ENCODE measurements at regions of chr12 and their contacts with region 1.

Region 1: GRCh38 chr12:94305130-94305957 is 154.3 kb downstream of the CEP83 start:
- DNase-seq: peak; percentile 92
- H3K4me3 Mint-ChIP-seq: peak overlapping the region; percentile 60
- H3K27ac Mint-ChIP-seq: peak overlapping the region; percentile 82
- H3K4me1 Mint-ChIP-seq: peaks cover 47% of the 10 kb centered on the region
- H3K27me3 Mint-ChIP-seq: no peaks in the 10 kb centered on the region

Region 2: DNA sequence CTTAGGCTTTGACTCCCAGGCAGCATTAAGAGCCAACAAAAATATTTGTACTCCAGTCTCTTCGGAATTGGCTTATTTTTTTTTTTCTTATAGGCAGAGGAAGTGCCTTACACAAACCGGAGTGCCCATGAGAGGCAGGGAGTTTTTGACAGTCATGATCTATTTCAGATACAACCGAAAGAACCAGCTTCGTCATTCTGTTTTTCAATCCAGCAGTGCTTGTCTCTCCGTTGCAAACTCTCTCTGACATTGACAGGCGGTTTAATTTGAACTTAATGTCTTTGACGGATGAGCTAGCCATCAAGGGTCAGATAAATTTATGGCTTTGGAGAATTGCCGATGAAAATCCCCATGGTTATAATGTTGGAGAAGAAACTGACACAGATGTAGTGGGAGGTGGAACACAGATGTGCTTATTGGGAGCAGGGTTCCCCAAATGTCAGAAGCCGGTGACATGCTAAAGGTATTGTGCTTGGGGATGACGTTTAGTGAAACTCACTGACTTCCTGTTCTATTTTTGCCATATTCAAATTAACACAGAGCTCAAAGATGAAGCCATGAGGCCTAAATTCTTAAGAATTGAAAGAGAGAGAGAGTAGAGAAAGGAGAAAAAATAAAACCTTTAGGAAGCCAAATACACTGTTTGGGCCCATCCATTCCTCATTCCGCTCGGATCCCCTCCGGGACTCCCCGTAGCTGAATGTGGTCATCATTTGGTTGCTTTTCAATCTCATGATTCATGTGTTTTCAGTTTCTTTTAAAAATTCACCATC is 97.3 kb before region 1 on chr12:
- intact Hi-C with region 1: loop called (anchors 1 kb)
- DNase-seq: peak; percentile 84
- H3K4me3 Mint-ChIP-seq: peak overlapping the region; percentile 84
- H3K27ac Mint-ChIP-seq: peak overlapping the region; percentile 95
- H3K4me1 Mint-ChIP-seq: peaks cover 59% of the 10 kb centered on the region
- H3K27me3 Mint-ChIP-seq: no peaks in the 10 kb centered on the region

Region 3: GRCh38 chr12:94230357-94230905 is 74.9 kb before region 1 on chr12:
- intact Hi-C with region 1: no loop called
- DNase-seq: no peak
- H3K4me3 Mint-ChIP-seq: peak overlapping the region; percentile 51
- H3K27ac Mint-ChIP-seq: peak overlapping the region; percentile 55
- H3K4me1 Mint-ChIP-seq: peaks cover 6% of the 10 kb centered on the region
- H3K27me3 Mint-ChIP-seq: no peaks in the 10 kb centered on the region

Region 4: DNA sequence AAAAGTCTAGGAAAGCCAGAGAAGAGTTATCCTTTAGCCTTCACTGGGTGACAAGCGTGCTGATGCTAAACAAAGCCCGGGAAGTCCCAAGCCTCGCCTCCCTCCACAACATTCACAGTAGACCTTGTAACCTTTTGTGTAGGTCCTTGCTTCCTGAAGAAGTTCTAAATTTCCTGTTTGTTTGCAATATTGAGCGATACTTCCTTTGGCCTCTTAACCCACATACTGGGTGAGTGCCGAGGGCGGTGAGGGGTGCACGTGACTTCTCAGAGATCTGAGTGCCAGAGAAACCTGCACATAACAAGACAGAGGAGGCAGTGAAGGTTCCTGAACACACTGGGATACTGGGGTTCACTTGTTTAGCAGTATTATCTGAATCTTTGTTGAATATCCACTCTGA is 22.7 kb before region 1 on chr12:
- intact Hi-C with region 1: loop called (anchors 1 kb)
- DNase-seq: peak; percentile 82
- H3K4me3 Mint-ChIP-seq: peak overlapping the region; percentile 59
- H3K27ac Mint-ChIP-seq: peak overlapping the region; percentile 74
- H3K4me1 Mint-ChIP-seq: peaks cover 28% of the 10 kb centered on the region
- H3K27me3 Mint-ChIP-seq: no peaks in the 10 kb centered on the region

Region 5: GRCh38 chr12:94372461-94372860 is 67.1 kb after region 1 on chr12:
- intact Hi-C with region 1: loop called (anchors 1 kb)
- DNase-seq: no peak
- H3K4me3 Mint-ChIP-seq: peak overlapping the region; percentile 35
- H3K27ac Mint-ChIP-seq: peak overlapping the region; percentile 85
- H3K4me1 Mint-ChIP-seq: peaks cover 23% of the 10 kb centered on the region
- H3K27me3 Mint-ChIP-seq: no peaks in the 10 kb centered on the region

Region 6: GRCh38 chr12:94488463-94488862 is 183.1 kb after region 1 on chr12:
- intact Hi-C with region 1: no loop called
- DNase-seq: no peak
- H3K4me3 Mint-ChIP-seq: no peak overlapping the region
- H3K27ac Mint-ChIP-seq: no peak overlapping the region
- H3K4me1 Mint-ChIP-seq: no peaks in the 10 kb centered on the region
- H3K27me3 Mint-ChIP-seq: peaks cover 8% of the 10 kb centered on the region

Region 7: DNA sequence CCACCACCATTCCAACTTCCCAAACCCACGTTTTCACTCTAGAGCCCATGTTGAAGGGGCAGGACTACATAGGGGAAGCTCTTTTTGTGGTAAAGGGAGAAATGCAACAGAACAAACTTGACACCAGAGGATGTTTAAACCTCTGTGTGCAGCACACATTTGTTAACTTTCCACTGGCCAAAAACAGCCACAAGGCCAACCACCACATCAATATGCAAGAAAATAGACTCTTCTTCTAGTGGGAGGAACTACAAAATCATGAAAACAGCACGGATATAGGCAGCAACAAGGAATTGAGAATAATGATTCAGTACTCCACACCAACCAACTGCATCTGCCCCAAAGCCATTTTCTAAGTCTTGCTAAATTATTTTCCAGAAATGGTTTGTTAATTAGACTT is 220.6 kb after region 1 on chr12:
- intact Hi-C with region 1: loop called (anchors 10 kb)
- DNase-seq: no peak
- H3K4me3 Mint-ChIP-seq: no peak overlapping the region
- H3K27ac Mint-ChIP-seq: no peak overlapping the region
- H3K4me1 Mint-ChIP-seq: peaks cover 2% of the 10 kb centered on the region
- H3K27me3 Mint-ChIP-seq: peaks cover 12% of the 10 kb centered on the region